Cardiac septum (tissue), 1 donor: ENCODE measurements at regions of chr19 and their contacts with region 1.

Region 1: GRCh38 chr19:44845612-44846454 is at the start of gene NECTIN2:
- DNase-seq: peak; percentile 100
- total RNA-seq, gene NECTIN2: 60.0 TPM

Region 2: GRCh38 chr19:44723952-44724319 is 121.9 kb before region 1 on chr19:
- intact Hi-C with region 1: loop called (anchors 10 kb)
- DNase-seq: peak; percentile 94

Region 3: GRCh38 chr19:44782729-44783128 is 63.1 kb before region 1 on chr19:
- intact Hi-C with region 1: loop called (anchors 1 kb)
- DNase-seq: no peak

Region 4: GRCh38 chr19:44800461-44800860 is 45.4 kb before region 1 on chr19:
- intact Hi-C with region 1: loop called (anchors 1 kb)
- DNase-seq: peak; percentile 91

Region 5: GRCh38 chr19:44808463-44809371 is 37.1 kb before region 1 on chr19 and contains the start of gene BCAM:
- intact Hi-C with region 1: loop called (anchors 2 kb)
- DNase-seq: peak; percentile 90
- total RNA-seq, gene BCAM: 86.8 TPM

Region 6: DNA sequence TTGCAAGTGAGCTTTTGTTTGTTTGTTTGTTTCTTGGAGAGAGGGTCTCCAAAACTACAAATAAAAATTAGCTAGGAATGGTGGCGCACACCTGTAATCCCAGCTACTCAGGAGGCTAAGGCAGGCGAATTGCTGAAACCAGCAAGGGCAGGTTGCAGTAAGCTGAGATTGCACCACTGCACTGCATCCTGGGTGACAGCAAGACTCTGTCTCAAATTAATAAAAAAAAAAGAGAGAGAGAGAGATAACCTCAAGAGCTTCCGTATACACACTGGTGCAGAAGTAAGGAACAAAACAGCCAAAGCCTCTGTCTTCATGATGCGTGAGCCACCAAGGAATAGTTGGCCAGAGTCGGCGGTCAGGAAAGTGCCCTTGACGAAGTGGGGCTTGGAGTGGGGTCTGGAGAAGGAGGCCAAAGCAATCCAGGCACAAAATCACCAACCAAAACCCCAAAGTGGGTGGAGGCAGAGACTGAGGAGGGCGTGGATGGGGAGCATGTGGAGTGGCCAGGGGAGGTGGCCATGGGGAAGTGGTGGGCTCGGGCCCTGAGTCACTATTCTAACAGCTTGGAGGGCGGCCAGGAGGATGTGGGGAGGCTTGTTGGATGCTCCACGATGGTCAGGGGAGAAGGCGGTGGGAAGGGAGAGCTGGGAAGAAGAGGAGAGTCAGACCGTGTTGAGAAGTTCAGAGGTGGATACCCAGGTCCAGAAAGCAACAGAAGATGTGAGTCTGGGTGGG is 24.1 kb after region 1 on chr19:
- intact Hi-C with region 1: loop called (anchors 2 kb)
- DNase-seq: no peak

Region 7: DNA sequence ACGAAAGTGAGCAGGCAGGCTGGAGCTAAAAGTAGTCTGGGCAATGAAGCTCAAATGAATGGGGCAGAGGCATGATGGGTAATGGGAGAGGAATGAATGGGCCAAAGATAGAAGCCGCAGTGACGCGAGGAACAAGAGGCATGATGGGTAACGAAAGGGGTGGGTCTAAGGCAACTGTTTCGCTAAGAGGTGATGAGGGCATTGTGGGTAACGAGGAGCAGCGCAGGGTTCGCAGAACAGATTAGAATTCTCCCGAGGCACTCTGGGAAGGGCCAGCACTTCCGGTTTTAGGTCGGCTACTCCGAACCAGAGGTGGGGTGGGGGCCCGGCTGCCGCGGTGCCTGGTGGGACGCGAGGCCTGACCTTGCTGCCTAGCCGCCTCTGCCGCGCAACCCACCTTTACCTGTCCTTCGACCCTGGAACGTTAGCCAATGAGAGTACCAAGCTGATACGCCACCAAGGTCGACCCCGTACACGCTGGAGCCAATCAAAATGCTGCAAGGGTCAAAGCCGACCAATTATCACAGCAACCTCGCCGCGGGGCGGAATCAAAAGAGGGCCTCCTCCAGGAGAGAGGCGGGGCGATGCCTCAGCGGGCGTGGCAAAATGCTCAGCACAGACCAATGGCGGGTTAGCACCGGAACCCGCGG is 44.7 kb after region 1 on chr19:
- intact Hi-C with region 1: loop called (anchors 2 kb)
- DNase-seq: peak; percentile 100